BJ (cell line): ENCODE measurements at regions of chr1 and their contacts with region 1.

Region 1: DNA sequence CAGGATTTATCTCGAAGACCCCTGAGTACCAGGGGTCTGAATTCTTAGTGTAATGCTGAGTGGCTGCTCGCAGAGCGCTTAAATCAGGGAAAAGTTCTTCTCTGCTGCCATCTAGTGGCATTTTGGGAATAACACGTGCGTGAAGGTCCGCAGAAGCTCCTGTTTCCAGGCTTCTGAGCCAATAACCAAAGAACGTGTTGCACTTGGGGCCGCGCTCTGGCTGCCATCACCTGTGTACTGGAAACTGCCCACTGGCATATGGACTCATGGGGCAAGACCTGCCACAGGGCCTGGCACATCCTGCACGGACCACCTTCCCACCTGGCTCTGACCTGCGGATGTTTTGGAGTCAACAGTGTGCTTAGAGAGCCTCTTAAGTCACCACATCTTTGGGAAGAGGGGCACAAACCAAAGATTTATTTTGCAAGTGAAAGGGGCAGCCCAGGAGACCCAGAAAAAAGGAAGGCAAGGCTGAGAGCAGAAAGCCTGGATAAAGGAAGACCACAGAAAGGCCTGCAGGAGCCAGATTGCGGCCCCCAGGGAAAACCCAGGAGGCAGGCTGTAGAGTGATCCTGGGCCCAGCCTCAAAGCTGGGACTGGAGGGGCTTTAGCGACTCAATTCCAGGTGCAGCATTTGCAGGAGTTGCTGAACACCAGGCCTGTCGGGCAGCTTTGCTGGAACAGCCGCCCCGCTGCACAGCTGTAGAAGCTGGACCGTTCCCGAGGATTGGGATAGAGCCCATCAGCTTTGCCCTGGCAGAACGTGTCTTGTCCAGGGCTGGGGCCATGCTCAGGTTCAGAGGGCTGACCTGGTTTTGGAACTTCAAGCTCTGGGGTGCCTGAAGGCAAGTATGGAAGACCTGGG is 13.0 kb downstream of the CHIT1 start:
- DNase-seq: no peak
- H3K4me3 ChIP-seq: no peak overlapping the region
- H3K27me3 ChIP-seq: peaks cover 8% of the 10 kb centered on the region; the same call in 1 of the 2 replicates
- CTCF ChIP-seq: peak; percentile 64

Region 2: GRCh38 chr1:202976633-202977032 is 239.9 kb before region 1 on chr1:
- CTCF ChIA-PET with region 1: no interaction called
- POLR2A ChIA-PET with region 1: no interaction called
- DNase-seq: no peak
- H3K4me3 ChIP-seq: no peak overlapping the region
- H3K27me3 ChIP-seq: peaks cover 26% of the 10 kb centered on the region
- CTCF ChIP-seq: no peak

Region 3: GRCh38 chr1:203038891-203039608 is 177.5 kb before region 1 on chr1:
- CTCF ChIA-PET with region 1: interaction called, 162 read pairs
- POLR2A ChIA-PET with region 1: no interaction called
- DNase-seq: no peak
- H3K4me3 ChIP-seq: no peak overlapping the region
- H3K27me3 ChIP-seq: no peaks in the 10 kb centered on the region
- CTCF ChIP-seq: peak; percentile 91

Region 4: DNA sequence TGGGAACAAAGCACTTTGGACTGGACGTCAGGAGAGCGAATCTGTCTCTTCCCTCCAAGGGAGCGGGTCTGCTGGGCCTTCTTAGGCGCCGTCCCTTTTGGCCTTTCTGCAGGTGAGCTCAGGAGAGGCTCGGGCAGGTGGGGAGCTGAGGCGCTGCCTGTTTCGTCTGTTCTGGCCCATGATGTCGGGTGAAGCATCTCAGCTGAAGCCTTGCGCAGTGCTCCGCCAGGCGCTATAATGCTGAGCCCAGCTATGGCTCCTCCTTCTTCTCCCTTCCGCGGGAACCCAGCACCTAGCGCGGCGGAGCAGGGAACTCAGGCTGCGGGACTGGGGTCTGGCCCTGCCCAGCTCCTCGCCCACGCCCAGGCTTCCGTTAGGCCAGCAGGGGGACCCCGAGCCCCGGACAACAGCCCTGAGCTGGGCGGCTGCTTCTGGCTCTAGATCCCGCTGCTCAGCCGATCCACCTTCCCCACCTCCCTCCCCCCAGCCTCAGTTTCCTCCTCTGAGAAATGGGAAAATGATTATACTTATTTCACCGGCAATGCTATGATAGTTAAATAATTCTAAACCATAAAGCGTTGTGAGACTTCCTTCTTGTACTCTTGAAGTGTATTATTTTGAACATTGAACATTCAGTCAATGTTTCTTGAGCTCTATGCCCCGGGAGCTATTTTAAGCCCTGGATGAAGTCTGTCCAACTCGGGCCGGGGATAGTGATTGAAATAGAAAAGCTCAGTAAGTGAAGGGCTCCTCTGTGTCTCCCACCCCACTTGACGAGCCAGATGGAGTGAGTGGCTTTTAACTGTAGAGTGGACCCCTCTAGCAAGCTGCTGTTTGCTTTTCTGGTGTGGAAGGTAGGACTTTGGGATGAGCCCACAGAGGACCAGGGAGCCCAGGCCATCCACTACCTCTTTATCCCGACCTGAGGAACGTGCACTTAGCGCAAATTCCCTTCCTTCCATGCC is 98.6 kb before region 1 on chr1:
- CTCF ChIA-PET with region 1: interaction called, 282 read pairs
- POLR2A ChIA-PET with region 1: no interaction called
- DNase-seq: no peak
- H3K4me3 ChIP-seq: no peak overlapping the region
- H3K27me3 ChIP-seq: peaks cover 38% of the 10 kb centered on the region
- CTCF ChIP-seq: peak; percentile 88

Region 5: DNA sequence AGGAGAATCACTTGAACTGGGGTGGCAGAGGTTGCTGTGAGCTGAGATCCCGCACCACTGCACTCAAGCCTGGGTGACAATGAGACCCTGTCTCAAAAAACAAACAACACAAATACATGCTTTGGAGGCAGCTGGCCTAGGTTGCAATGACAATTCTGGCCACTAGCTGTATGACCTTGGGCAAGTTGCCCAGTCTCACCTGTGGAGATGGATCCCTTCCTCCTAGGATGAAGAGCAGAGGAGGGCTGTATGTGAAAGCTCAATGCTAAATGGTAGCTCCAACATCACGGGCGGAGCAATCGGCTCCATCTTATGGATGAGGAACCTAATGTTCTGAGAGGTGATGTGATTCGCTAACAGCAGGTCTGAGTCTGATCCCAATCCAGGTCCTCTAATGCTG is 68.4 kb before region 1 on chr1:
- CTCF ChIA-PET with region 1: interaction called, 19 read pairs
- POLR2A ChIA-PET with region 1: no interaction called
- DNase-seq: no peak
- H3K4me3 ChIP-seq: no peak overlapping the region
- H3K27me3 ChIP-seq: no peaks in the 10 kb centered on the region
- CTCF ChIP-seq: 0 out of 2 replicates have a peak, but pooled peaks have one; percentile 19

Region 6: GRCh38 chr1:203197625-203198024 is 18.9 kb before region 1 on chr1:
- CTCF ChIA-PET with region 1: interaction called, 58 read pairs
- POLR2A ChIA-PET with region 1: no interaction called
- DNase-seq: no peak
- H3K4me3 ChIP-seq: no peak overlapping the region
- H3K27me3 ChIP-seq: no peaks in the 10 kb centered on the region
- CTCF ChIP-seq: no peak